Activated naive CD4-positive, alpha-beta T cell treated with anti-CD3 and anti-CD28 coated beads for 36 hours (primary cell): ENCODE measurements at regions of chr3 and their contacts with region 1.

Region 1: GRCh38 chr3:101779047-101779821 is at the start of gene NXPE3:
- DNase-seq: peak; percentile 96
- H3K4me3 Mint-ChIP-seq: peak within 1 kb of the TSS; percentile 95
- H3K27ac Mint-ChIP-seq: peak within 1 kb of the TSS; percentile 96
- H3K4me1 Mint-ChIP-seq: peaks cover 49% of the 10 kb centered on the region
- H3K27me3 Mint-ChIP-seq: no peaks in the 10 kb centered on the region
- total RNA-seq, gene NXPE3: 18.9 to 19.3 TPM

Region 2: DNA sequence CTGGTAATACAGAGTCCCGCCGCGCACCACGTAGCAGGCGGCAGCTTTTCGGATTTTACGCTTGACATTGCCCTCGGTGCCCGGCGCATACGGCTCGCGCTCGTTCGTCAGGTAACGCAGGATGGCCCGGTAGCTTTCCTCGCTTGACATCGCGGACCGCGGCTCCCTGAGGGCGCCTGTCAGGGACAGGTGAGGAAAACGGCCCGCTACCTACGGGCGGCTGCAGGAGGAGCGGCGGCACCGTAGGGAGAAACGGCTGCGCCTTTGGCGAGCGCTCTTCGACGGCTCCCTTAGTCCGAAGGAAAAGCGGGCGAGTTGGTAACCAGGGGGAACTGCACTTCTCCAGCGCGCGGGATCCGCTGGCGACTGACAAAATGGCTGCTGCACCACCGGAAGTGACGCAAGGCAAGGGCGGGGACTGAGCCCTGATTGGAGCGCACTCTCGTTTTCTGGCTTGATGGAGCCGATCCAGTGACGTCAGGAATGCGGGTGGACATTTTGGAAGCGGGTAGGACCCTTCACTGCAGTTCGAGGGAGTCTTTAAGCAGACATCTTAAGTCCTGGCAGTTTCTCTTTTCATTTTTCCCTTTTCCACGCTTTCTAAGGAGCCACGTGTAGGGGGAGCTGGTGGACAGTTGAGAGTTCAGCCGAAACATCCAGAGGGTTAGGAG is 102.3 kb before region 1 on chr3 and contains the start of gene ZBTB11:
- CTCF ChIA-PET with region 1: interaction called, 3 read pairs
- intact Hi-C with region 1: loop called (anchors 1 kb)
- DNase-seq: peak; percentile 100
- H3K4me3 Mint-ChIP-seq: peak within 1 kb of the TSS; percentile 87
- H3K27ac Mint-ChIP-seq: peak within 1 kb of the TSS; percentile 95
- H3K4me1 Mint-ChIP-seq: peaks cover 54% of the 10 kb centered on the region
- H3K27me3 Mint-ChIP-seq: no peaks in the 10 kb centered on the region
- total RNA-seq, gene ZBTB11: 31.2 to 31.7 TPM

Region 3: DNA sequence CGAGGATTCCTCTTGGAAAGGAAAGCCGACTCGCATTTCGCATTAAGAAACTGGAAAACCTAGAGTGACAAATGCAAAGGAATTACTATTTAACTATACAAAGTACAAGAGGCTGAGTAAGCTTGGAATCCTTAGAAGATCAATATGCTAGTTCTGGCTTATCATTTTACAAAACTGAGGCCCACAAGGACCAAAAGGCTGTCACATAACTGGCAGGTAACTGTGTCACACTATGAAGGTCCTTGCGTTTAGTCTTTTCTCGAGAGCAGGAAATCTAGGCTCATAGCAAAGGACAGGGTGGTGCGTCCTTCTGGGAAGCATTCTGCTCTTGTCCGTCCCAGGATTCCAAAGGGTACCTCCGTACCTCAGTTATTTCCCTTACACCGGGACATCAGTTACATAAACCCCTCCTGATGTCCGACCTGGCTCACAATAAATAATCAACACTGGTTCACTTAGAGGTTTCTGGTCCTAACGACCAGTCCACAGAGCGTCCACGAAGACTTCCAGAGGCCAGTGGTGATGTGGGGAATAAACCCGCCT is 93.3 kb before region 1 on chr3:
- CTCF ChIA-PET with region 1: no interaction called
- intact Hi-C with region 1: loop called (anchors 1 kb)
- DNase-seq: no peak
- H3K4me3 Mint-ChIP-seq: peak overlapping the region; percentile 98
- H3K27ac Mint-ChIP-seq: peak overlapping the region; percentile 99
- H3K4me1 Mint-ChIP-seq: peaks cover 54% of the 10 kb centered on the region
- H3K27me3 Mint-ChIP-seq: no peaks in the 10 kb centered on the region

Region 4: GRCh38 chr3:101898752-101899169 is 119.5 kb after region 1 on chr3:
- CTCF ChIA-PET with region 1: no interaction called
- intact Hi-C with region 1: no loop called
- DNase-seq: no peak
- H3K4me3 Mint-ChIP-seq: no peak overlapping the region
- H3K27ac Mint-ChIP-seq: no peak overlapping the region
- H3K4me1 Mint-ChIP-seq: peaks cover 17% of the 10 kb centered on the region
- H3K27me3 Mint-ChIP-seq: no peaks in the 10 kb centered on the region